IMR-90 (cell line): ENCODE measurements at regions of chr11 and their contacts with region 1.

Region 1: GRCh38 chr11:8863838-8864237 is 47.2 kb upstream of the AKIP1 start:
- DNase-seq: peak; percentile 78
- ATAC-seq: peak; percentile 84
- H3K4me3 ChIP-seq: no peak overlapping the region
- H3K27ac ChIP-seq: peak overlapping the region; percentile 45; the same call in 1 of the 2 replicates
- H3K4me1 ChIP-seq: peaks cover 20% of the 10 kb centered on the region
- H3K27me3 ChIP-seq: no peaks in the 10 kb centered on the region
- CTCF ChIP-seq: no peak
- POLR2A ChIP-seq: no peak
- RAD21 ChIP-seq: no peak

Region 2: GRCh38 chr11:8839957-8840945 is 23.6 kb before region 1 on chr11:
- CTCF ChIA-PET with region 1: no interaction called
- POLR2A ChIA-PET with region 1: no interaction called
- dilution Hi-C with region 1: no loop called
- in situ Hi-C with region 1: no loop called
- intact Hi-C with region 1: loop called (anchors 2 kb)
- DNase-seq: peak; percentile 74
- ATAC-seq: peak; percentile 57
- H3K4me3 ChIP-seq: no peak overlapping the region
- H3K27ac ChIP-seq: peak overlapping the region; percentile 56
- H3K4me1 ChIP-seq: peaks cover 29% of the 10 kb centered on the region
- H3K27me3 ChIP-seq: no peaks in the 10 kb centered on the region
- CTCF ChIP-seq: no peak
- POLR2A ChIP-seq: no peak
- RAD21 ChIP-seq: no peak